ENCODE measurements at regions of chr16 and their contacts with region 1.

Region 1: DNA sequence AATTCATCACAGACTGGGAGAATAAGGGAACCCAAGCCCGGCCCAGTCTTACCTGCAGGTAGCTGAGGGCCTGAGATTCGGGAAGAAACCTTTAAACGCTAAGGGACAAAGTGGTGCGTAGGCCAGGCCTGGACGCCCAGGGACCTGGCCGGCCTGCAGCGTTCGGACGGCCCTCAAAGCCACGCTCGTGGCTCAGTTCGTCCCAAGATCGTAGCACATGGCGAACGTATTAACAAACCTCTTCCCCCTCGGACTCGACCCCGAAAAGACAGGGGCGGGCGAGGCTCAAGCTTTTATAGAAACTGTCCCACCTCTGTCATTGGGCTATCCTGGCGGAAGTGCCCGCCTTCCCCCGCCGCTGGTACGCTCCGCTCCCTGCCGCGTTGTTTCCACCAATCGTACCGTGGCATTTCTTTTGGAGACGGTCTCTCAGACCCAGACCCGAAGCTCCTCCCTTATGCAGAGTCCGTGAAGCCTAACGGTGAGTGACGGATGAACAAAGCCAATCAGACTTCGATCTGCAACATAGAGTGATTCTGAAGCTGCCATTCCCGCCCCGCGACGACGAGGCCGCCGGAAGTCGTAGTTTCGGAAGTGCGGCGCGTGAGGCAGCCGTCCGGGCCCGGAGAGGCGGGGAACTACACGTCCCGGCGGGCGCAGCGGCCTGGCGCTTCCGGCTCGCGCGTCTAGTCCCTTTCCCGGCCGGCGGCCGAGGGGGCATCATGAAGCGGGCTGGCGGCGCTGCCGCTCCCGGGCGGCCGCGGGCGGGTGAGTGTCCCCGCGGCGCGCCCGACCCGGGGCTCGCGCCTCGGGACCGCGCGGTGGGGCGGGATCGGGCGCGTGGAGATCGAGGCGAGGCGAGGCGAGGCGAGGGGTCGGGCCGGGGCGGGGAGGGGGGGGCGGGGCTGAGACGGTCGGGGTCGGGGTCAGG is at the start of gene TRAF7:
- DNase-seq: peak; percentile 97 to 100 (median 99)
- H3K4me3 ChIP-seq: peak within 1 kb of the TSS; percentile 75 to 79
- H3K4me3 Mint-ChIP-seq: peak within 1 kb of the TSS; percentile 94 to 98 (median 95)
- H3K27ac ChIP-seq: peak within 1 kb of the TSS; percentile 83
- H3K27ac Mint-ChIP-seq: peak within 1 kb of the TSS; percentile 75 to 98 (median 94)
- H3K4me1 ChIP-seq: peaks cover 70% of the 10 kb centered on the region
- H3K4me1 Mint-ChIP-seq: peaks cover 30 to 63% (median 45%) of the 10 kb centered on the region in 4 donors
- H3K27me3 ChIP-seq: no peaks in the 10 kb centered on the region
- H3K27me3 Mint-ChIP-seq: no peaks in the 10 kb centered on the region
- total RNA-seq, gene TRAF7: 40.9 to 41.9 TPM

Region 2: GRCh38 chr16:1564325-1564724 is 591.0 kb before region 1 on chr16:
- CTCF ChIA-PET with region 1: no interaction called
- POLR2A ChIA-PET with region 1: no interaction called
- intact Hi-C with region 1: no loop called
- DNase-seq: no peak
- H3K4me3 ChIP-seq: no peak overlapping the region
- H3K4me3 Mint-ChIP-seq: no peak overlapping the region
- H3K27ac ChIP-seq: no peak overlapping the region
- H3K27ac Mint-ChIP-seq: no peak overlapping the region
- H3K4me1 ChIP-seq: peaks cover 36% of the 10 kb centered on the region
- H3K4me1 Mint-ChIP-seq: peaks cover 14 to 38% (median 26%) of the 10 kb centered on the region in 4 donors
- H3K27me3 ChIP-seq: no peaks in the 10 kb centered on the region
- H3K27me3 Mint-ChIP-seq: no peaks in the 10 kb centered on the region

Region 3: GRCh38 chr16:1884155-1884760 is 271.1 kb before region 1 on chr16:
- CTCF ChIA-PET with region 1: no interaction called
- POLR2A ChIA-PET with region 1: no interaction called
- intact Hi-C with region 1: no loop called
- DNase-seq: no peak
- H3K4me3 ChIP-seq: no peak overlapping the region
- H3K4me3 Mint-ChIP-seq: no peak overlapping the region
- H3K27ac ChIP-seq: no peak overlapping the region
- H3K27ac Mint-ChIP-seq: no peak overlapping the region
- H3K4me1 ChIP-seq: no peaks in the 10 kb centered on the region
- H3K4me1 Mint-ChIP-seq: no peaks in the 10 kb centered on the region
- H3K27me3 ChIP-seq: peaks cover 4% of the 10 kb centered on the region
- H3K27me3 Mint-ChIP-seq: peaks cover 0 to 18% of the 10 kb centered on the region in 2 donors

Region 4: GRCh38 chr16:1942810-1943726 is 212.3 kb before region 1 on chr16 and contains the start of gene MSRB1:
- CTCF ChIA-PET with region 1: no interaction called
- POLR2A ChIA-PET with region 1: interaction called, 7 read pairs
- intact Hi-C with region 1: loop called (anchors 1 kb)
- DNase-seq: peak; percentile 97 to 99 (median 98)
- H3K4me3 ChIP-seq: peak within 1 kb of the TSS; percentile 52 to 90
- H3K4me3 Mint-ChIP-seq: peak within 1 kb of the TSS; percentile 82 to 91 (median 86)
- H3K27ac ChIP-seq: peak within 1 kb of the TSS; percentile 58
- H3K27ac Mint-ChIP-seq: peak within 1 kb of the TSS; percentile 64 to 91 (median 70)
- H3K4me1 ChIP-seq: peaks cover 21% of the 10 kb centered on the region
- H3K4me1 Mint-ChIP-seq: peaks cover 0 to 26% (median 7%) of the 10 kb centered on the region in 4 donors
- H3K27me3 ChIP-seq: no peaks in the 10 kb centered on the region
- H3K27me3 Mint-ChIP-seq: no peaks in the 10 kb centered on the region
- total RNA-seq, gene MSRB1: 9.3 to 10.6 TPM

Region 5: GRCh38 chr16:1983544-1984346 is 171.6 kb before region 1 on chr16 and contains the start of gene GFER:
- CTCF ChIA-PET with region 1: interaction called, 4 read pairs
- POLR2A ChIA-PET with region 1: interaction called, 6 read pairs
- intact Hi-C with region 1: loop called (anchors 1 kb)
- DNase-seq: peak; percentile 47 to 70 (median 63)
- H3K4me3 ChIP-seq: peak within 1 kb of the TSS; percentile 52 to 64
- H3K4me3 Mint-ChIP-seq: peak within 1 kb of the TSS; percentile 78 to 89 (median 86)
- H3K27ac ChIP-seq: peak within 1 kb of the TSS; percentile 57
- H3K27ac Mint-ChIP-seq: peak within 1 kb of the TSS; percentile 57 to 91 (median 86)
- H3K4me1 ChIP-seq: peaks cover 22% of the 10 kb centered on the region
- H3K4me1 Mint-ChIP-seq: peaks cover 4 to 22% (median 15%) of the 10 kb centered on the region in 4 donors
- H3K27me3 ChIP-seq: peaks cover 20% of the 10 kb centered on the region
- H3K27me3 Mint-ChIP-seq: peaks cover 11 to 14% of the 10 kb centered on the region in 2 donors
- total RNA-seq, gene GFER: 19.6 to 22.6 TPM

Region 6: DNA sequence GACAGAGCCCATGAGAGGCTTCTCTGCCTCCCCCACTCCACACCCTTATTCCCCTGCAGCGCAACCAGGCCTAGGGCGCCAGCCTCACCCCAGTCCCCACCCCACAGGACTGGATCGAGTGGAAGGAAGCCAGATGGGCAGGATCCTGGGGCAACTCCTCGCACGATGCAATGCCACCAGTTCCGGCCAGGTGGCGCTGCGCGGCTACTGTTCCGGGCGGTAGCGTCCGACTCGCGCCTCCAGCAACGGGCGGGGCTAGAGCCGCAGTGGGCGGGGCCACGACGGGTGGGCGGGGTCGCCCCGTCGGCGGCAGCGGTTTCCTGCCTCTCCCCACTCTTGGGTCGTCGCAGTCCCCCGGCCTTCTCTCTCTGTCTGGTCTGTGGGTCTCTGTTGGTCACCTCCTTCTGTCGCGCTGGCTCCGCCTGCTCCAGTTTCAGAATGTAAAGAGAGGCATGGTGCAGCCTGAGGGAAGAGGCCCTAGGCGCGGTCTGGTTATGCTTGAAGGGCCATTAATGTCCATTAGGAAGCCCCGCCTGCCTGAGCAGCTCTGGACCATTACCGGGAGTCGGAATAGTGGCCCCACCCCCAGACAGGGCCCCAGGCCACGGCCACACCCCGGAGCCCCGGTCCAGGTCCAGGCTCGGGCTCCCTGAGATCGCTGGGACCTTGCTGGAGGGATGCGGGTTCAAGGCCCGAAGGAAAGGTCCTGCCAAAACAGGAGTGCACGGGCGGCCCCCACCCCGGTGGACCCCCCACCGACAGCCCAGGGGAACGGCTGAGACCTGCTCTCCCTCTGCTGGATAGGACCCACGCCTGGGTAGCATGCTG is 132.0 kb before region 1 on chr16:
- CTCF ChIA-PET with region 1: interaction called, 17 read pairs
- POLR2A ChIA-PET with region 1: interaction called, 51 read pairs
- intact Hi-C with region 1: loop called (anchors 1 kb)
- DNase-seq: peak; percentile 89 to 95 (median 91)
- H3K4me3 ChIP-seq: peak overlapping the region in 1 of 2 donors; percentile 30
- H3K4me3 Mint-ChIP-seq: peak overlapping the region; percentile 6 to 76 (median 70)
- H3K27ac ChIP-seq: peak overlapping the region; percentile 44
- H3K27ac Mint-ChIP-seq: peak overlapping the region in 6 of 7 donors; percentile 60 to 91 (median 76)
- H3K4me1 ChIP-seq: peaks cover 29% of the 10 kb centered on the region
- H3K4me1 Mint-ChIP-seq: peaks cover 9 to 26% (median 17%) of the 10 kb centered on the region in 4 donors
- H3K27me3 ChIP-seq: peaks cover 12% of the 10 kb centered on the region
- H3K27me3 Mint-ChIP-seq: peaks cover 15 to 16% of the 10 kb centered on the region in 2 donors

Region 7: GRCh38 chr16:2071454-2072202 is 83.7 kb before region 1 on chr16:
- CTCF ChIA-PET with region 1: no interaction called
- POLR2A ChIA-PET with region 1: no interaction called
- intact Hi-C with region 1: no loop called
- DNase-seq: no peak
- H3K4me3 ChIP-seq: no peak overlapping the region
- H3K4me3 Mint-ChIP-seq: no peak overlapping the region
- H3K27ac ChIP-seq: no peak overlapping the region
- H3K27ac Mint-ChIP-seq: no peak overlapping the region
- H3K4me1 ChIP-seq: no peaks in the 10 kb centered on the region
- H3K4me1 Mint-ChIP-seq: no peaks in the 10 kb centered on the region
- H3K27me3 ChIP-seq: no peaks in the 10 kb centered on the region
- H3K27me3 Mint-ChIP-seq: no peaks in the 10 kb centered on the region

Region 8: GRCh38 chr16:2213817-2214720 is 58.7 kb after region 1 on chr16:
- CTCF ChIA-PET with region 1: interaction called, 4 read pairs
- POLR2A ChIA-PET with region 1: interaction called, 28 read pairs
- intact Hi-C with region 1: loop called (anchors 2 kb)
- DNase-seq: no peak
- H3K4me3 ChIP-seq: peak overlapping the region in 1 of 2 donors; percentile 51
- H3K4me3 Mint-ChIP-seq: peak overlapping the region; percentile 74 to 80 (median 77)
- H3K27ac ChIP-seq: peak overlapping the region; percentile 55
- H3K27ac Mint-ChIP-seq: peak overlapping the region in 4 of 7 donors; percentile 13 to 83 (median 28)
- H3K4me1 ChIP-seq: peaks cover 20% of the 10 kb centered on the region
- H3K4me1 Mint-ChIP-seq: peaks cover 8 to 27% (median 17%) of the 10 kb centered on the region in 4 donors
- H3K27me3 ChIP-seq: no peaks in the 10 kb centered on the region
- H3K27me3 Mint-ChIP-seq: no peaks in the 10 kb centered on the region

Region 9: DNA sequence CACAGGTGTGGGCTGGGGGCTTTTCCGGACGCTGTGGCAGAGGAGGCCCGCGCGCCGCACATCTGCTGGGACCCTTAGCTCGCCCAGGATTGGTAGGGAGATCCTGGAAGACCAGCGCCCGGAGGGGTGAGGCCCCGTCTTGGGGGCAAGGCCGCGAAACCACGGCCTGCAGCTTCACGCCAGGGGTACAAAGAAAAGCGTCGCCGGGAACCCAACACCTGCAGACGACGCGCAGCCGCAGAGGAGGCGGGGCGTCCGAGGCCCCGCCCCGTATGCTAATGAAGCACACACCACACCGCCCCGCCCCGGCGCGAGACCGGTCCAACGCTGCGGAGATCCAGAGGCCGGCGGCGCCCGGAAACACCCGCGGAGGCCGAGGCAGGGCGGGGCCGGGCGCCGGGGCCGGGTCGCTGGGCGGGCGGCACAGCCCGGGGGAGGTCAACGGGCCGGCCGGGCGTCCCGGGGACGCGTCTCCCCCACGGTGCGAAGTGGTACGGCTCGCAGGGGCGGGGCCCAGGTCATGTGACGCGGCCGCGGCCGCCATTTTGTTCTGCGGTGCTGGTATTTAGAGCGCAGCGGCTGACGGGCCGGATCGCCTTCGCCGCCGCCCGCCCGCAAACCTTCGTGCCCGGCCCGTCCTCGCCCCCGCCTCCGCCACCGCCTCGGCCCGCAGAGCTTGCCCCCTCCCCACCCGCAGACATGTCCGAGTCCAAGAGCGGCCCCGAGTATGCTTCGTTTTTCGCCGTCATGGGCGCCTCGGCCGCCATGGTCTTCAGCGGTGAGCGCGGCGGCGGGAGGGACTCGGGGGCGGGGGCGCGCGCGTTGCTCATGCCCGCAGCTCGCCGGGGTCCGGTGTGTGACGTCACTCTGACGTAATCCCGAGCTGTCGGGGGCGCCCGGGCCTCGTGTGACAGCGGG is 358.3 kb after region 1 on chr16 and contains the start of gene ATP6V0C:
- CTCF ChIA-PET with region 1: no interaction called
- POLR2A ChIA-PET with region 1: interaction called, 7 read pairs
- intact Hi-C with region 1: loop called (anchors 1 kb)
- DNase-seq: peak; percentile 90 to 97 (median 94)
- H3K4me3 ChIP-seq: peak within 1 kb of the TSS; percentile 74 to 77
- H3K4me3 Mint-ChIP-seq: peak within 1 kb of the TSS; percentile 90 to 96 (median 92)
- H3K27ac ChIP-seq: peak within 1 kb of the TSS; percentile 94
- H3K27ac Mint-ChIP-seq: peak within 1 kb of the TSS; percentile 91 to 98 (median 97)
- H3K4me1 ChIP-seq: peaks cover 48% of the 10 kb centered on the region
- H3K4me1 Mint-ChIP-seq: peaks cover 32 to 64% (median 46%) of the 10 kb centered on the region in 4 donors
- H3K27me3 ChIP-seq: no peaks in the 10 kb centered on the region
- H3K27me3 Mint-ChIP-seq: no peaks in the 10 kb centered on the region
- total RNA-seq, gene ATP6V0C: 125 to 129 TPM

Measured in CD4-positive, alpha-beta memory T cell (primary cell).